ENCODE measurements at regions of chr10 and their contacts with region 1.

Region 1: GRCh38 chr10:55091691-55092328 is 290.8 kb upstream of the PCDH15 start:
- DNase-seq: no peak
- ATAC-seq: no peak
- H3K4me3 ChIP-seq: no peak overlapping the region
- H3K27ac ChIP-seq: no peak overlapping the region
- H3K4me1 ChIP-seq: no peaks in the 10 kb centered on the region
- H3K27me3 ChIP-seq: no peaks in the 10 kb centered on the region
- CTCF ChIP-seq: peak; percentile 52
- EP300 ChIP-seq: no peak
- POLR2A ChIP-seq: no peak
- RAD21 ChIP-seq: no peak

Region 2: GRCh38 chr10:54962134-54962900 is 129.5 kb before region 1 on chr10:
- CTCF ChIA-PET with region 1: no interaction called
- POLR2A ChIA-PET with region 1: no interaction called
- in situ Hi-C with region 1: no loop called
- intact Hi-C with region 1: no loop called
- DNase-seq: no peak
- ATAC-seq: no peak
- H3K4me3 ChIP-seq: no peak overlapping the region
- H3K27ac ChIP-seq: no peak overlapping the region
- H3K4me1 ChIP-seq: no peaks in the 10 kb centered on the region
- H3K27me3 ChIP-seq: no peaks in the 10 kb centered on the region
- CTCF ChIP-seq: no peak
- EP300 ChIP-seq: no peak
- POLR2A ChIP-seq: no peak
- RAD21 ChIP-seq: no peak

Region 3: GRCh38 chr10:55063811-55064210 is 28.0 kb before region 1 on chr10:
- CTCF ChIA-PET with region 1: no interaction called
- POLR2A ChIA-PET with region 1: no interaction called
- in situ Hi-C with region 1: no loop called
- intact Hi-C with region 1: loop called (anchors 2 kb)
- DNase-seq: no peak
- ATAC-seq: no peak
- H3K4me3 ChIP-seq: no peak overlapping the region
- H3K27ac ChIP-seq: no peak overlapping the region
- H3K4me1 ChIP-seq: peaks cover 23% of the 10 kb centered on the region
- H3K27me3 ChIP-seq: no peaks in the 10 kb centered on the region
- CTCF ChIP-seq: no peak
- EP300 ChIP-seq: no peak
- POLR2A ChIP-seq: no peak
- RAD21 ChIP-seq: no peak

Region 4: DNA sequence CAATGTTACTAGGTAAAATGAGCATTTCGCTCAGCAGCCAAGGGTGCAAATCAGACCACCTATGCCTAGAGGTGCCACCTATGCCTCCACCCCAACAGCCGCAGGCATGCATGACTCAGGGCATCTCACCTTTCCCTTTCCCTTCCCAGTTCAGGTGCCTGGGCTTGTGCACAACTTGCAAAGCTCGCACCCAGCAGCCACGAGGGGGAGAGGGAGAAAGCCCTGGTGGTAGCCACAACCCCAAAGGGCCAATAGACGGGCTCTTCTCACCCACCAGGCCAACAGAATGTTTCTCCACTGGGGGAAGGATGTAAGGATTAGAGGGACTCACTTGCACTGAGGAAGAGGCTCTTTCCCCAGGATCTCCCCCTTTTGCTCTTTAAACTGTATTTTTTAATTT is 171.5 kb after region 1 on chr10:
- CTCF ChIA-PET with region 1: interaction called, 14 read pairs
- POLR2A ChIA-PET with region 1: no interaction called
- in situ Hi-C with region 1: no loop called
- intact Hi-C with region 1: loop called (anchors 1 kb)
- DNase-seq: no peak
- ATAC-seq: peak; percentile 79
- H3K4me3 ChIP-seq: no peak overlapping the region
- H3K27ac ChIP-seq: no peak overlapping the region
- H3K4me1 ChIP-seq: no peaks in the 10 kb centered on the region
- H3K27me3 ChIP-seq: no peaks in the 10 kb centered on the region
- CTCF ChIP-seq: no peak
- EP300 ChIP-seq: no peak
- POLR2A ChIP-seq: no peak
- RAD21 ChIP-seq: no peak

Region 5: DNA sequence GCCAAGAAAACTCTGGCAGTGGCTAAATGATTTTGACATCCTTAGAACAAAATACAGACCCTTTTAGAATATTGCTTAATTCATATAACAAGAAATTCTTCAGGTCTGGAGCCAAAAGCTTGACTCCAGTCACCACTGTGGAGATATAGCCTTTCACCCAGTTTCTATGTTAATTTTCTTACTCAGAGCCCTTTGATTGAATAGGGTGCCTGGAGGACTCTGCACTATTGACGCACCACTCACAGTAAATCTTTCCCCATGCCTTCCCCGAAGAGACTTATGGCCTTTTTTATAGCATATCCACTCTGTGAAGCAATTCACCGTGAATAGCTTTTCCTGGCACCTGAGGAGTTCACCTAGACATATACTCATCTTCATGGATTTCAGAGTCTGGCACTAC is 655.4 kb after region 1 on chr10:
- CTCF ChIA-PET with region 1: no interaction called
- POLR2A ChIA-PET with region 1: no interaction called
- in situ Hi-C with region 1: loop called (anchors 25 kb)
- intact Hi-C with region 1: no loop called
- DNase-seq: no peak
- ATAC-seq: peak; percentile 43; the same call in 2 of the 3 replicates
- H3K4me3 ChIP-seq: no peak overlapping the region
- H3K27ac ChIP-seq: no peak overlapping the region
- H3K4me1 ChIP-seq: no peaks in the 10 kb centered on the region
- H3K27me3 ChIP-seq: no peaks in the 10 kb centered on the region
- CTCF ChIP-seq: no peak
- EP300 ChIP-seq: no peak
- POLR2A ChIP-seq: no peak
- RAD21 ChIP-seq: no peak